GM12878 (cell line): ENCODE measurements at regions of chr19 and their contacts with region 1.

Region 1: DNA sequence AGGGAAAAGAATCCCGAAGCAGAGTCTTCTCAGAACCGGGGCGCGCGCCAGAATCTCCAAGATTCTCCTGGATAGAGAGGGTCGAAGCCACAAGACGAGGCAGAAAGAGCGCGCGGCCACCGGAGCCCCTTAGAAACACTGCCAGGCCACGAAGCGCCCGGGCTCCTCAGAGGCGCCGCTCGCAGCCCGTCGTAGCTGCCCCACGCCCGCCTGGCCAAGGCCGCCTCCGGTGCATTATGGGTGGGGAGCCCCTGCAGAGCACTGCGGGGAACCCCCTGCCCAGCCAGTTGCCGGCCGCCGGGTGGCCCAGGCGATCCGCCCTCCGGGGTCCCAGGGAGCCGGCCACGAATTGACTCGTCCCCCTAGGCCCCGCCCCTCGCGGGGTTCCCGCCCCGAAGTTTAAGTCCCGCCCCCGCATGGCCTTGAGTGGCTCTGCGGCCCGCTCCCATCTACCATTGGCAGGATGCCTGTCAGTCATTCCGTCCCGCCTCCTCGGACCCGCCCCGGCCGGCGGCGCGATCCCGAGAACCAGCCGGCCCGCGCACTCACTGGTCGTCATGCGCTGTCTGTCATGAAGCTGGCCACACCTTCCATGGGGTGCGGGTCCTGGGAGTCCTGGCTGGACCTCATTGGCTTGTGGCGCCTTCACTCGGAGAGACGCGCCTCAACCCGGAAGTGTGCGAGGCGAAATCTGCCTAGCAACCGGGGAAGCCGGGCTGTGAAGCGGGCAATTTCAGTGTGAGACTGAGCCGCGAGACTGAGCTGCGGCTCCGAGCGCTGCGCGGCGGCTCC is 20.2 kb upstream of the GATAD2A start:
- DNase-seq: peak; percentile 99
- ATAC-seq: peak; percentile 95
- H3K4me3 ChIP-seq: peak overlapping the region; percentile 69
- H3K27ac ChIP-seq: peak overlapping the region; percentile 89
- H3K4me1 ChIP-seq: peaks cover 19% of the 10 kb centered on the region
- H3K27me3 ChIP-seq: no peaks in the 10 kb centered on the region
- CTCF ChIP-seq: peak; percentile 9 to 52 (median 27); a peak in 4 of 6 replicates
- EP300 ChIP-seq: no peak
- POLR2A ChIP-seq: peak; percentile 80
- RAD21 ChIP-seq: peak; percentile 51

Region 2: DNA sequence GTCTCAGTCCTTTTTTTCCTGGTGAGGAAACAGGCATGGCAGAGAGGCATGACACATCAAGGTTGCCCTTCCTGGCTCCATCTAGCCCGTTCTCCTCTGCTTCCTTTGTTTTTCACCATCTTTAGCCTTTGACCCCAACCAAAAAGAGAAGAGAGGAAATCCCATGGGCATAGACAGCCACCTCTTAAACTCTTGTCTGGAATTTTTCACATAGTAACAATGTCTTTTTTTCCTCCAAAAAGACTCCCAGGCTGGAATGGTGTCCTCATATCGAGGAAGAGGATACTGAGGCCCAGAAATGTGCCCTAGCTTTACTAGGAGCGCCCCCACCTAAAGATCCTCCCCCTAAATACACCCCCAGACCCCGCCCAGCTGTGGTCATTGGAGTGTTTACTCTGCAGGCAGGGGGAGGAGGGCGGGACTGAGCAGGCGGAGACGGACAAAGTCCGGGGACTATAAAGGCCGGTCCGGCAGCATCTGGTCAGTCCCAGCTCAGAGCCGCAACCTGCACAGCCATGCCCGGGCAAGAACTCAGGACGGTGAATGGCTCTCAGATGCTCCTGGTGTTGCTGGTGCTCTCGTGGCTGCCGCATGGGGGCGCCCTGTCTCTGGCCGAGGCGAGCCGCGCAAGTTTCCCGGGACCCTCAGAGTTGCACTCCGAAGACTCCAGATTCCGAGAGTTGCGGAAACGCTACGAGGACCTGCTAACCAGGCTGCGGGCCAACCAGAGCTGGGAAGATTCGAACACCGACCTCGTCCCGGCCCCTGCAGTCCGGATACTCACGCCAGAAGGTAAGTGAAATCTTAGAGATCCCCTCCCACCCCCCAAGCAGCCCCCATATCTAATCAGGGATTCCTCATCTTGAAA is 999.4 kb before region 1 on chr19 and contains the start of gene GDF15:
- CTCF ChIA-PET with region 1: no interaction called
- POLR2A ChIA-PET with region 1: no interaction called
- RAD21 ChIA-PET with region 1: no interaction called
- SMC1A ChIA-PET with region 1: no interaction called
- in situ Hi-C with region 1: no loop called
- intact Hi-C with region 1: no loop called
- DNase-seq: no peak
- ATAC-seq: peak; percentile 70
- H3K4me3 ChIP-seq: 0 out of 2 replicates have a peak within 1 kb of the TSS, but pooled peaks have one; percentile 5
- H3K27ac ChIP-seq: no peak within 1 kb of the TSS
- H3K4me1 ChIP-seq: peaks cover 8% of the 10 kb centered on the region
- H3K27me3 ChIP-seq: peaks cover 0 to 3% of the 10 kb centered on the region in 2 experiments; a peak in 3 of 4 replicates
- CTCF ChIP-seq: peak; percentile 49 to 85 (median 55)
- EP300 ChIP-seq: no peak
- POLR2A ChIP-seq: peak; percentile 70
- RAD21 ChIP-seq: no peak
- polyA plus RNA-seq, gene GDF15: 0.11 TPM in 1 of 2 experiments, not detected in the other

Region 3: DNA sequence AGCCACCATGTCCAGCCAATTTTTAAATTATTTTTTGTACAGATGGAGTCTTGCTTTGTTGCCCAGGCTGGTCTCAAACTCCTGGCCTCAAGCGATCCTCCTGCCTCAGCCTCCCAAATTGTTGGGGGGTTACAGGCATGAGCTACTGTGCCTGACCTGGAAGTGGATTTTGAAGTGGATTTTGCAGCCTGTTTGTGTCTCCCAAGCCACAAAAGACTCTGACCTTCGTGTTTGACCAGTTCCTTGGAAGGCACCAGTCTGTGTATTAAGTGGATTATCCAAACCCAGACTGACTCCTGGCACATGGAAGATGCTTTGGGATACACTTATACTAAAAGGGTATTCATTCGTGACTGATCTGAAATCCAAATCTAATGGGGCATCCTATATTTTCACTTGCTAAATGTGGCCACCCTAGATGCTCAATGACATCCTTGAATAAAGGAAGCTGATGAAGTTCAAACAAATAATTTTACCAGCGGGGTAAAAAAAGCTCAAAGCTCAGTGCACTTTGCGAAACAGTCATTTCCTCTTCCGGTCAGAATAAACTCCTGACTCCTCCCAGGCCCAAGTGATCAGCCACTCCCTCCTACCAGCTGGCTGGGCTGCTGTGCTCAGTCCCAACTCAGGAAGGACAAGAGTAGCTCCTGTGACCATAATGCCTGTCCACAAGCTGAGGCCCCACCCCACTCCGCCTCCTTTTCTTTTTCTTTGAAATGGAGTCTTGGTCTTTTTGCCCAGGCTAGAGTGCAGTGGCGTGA is 12.5 kb before region 1 on chr19:
- CTCF ChIA-PET with region 1: interaction called, 4 read pairs
- POLR2A ChIA-PET with region 1: interaction called, 6 read pairs
- RAD21 ChIA-PET with region 1: interaction called, 10 read pairs
- SMC1A ChIA-PET with region 1: interaction called, 6 read pairs
- in situ Hi-C with region 1: no loop called
- intact Hi-C with region 1: no loop called
- DNase-seq: no peak
- ATAC-seq: peak; percentile 99
- H3K4me3 ChIP-seq: no peak overlapping the region
- H3K27ac ChIP-seq: peak overlapping the region; percentile 51
- H3K4me1 ChIP-seq: peaks cover 5% of the 10 kb centered on the region
- H3K27me3 ChIP-seq: no peaks in the 10 kb centered on the region
- CTCF ChIP-seq: no peak
- EP300 ChIP-seq: no peak
- POLR2A ChIP-seq: peak; percentile 37; the same call in 1 of the 2 replicates
- RAD21 ChIP-seq: no peak

Region 4: DNA sequence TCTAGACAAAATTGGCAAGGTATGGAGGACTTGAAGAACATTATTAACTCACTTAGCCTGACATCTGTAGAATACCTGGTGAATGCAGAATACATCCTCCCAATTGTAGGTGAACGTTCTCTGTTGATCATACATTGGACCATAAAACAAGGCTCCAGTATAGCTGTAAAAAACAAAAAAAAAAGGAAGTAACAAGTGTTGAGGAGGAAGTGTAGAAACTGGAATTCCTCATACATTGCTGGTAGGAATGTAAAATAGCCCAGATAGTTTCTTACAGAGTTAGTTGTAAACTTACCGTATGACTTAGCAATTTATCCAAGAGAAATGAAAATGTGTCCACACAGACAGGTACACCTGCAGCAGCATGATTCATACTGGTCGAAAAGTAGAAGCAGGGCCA is 85.3 kb after region 1 on chr19:
- CTCF ChIA-PET with region 1: no interaction called
- POLR2A ChIA-PET with region 1: no interaction called
- RAD21 ChIA-PET with region 1: interaction called, 4 read pairs
- SMC1A ChIA-PET with region 1: no interaction called
- in situ Hi-C with region 1: no loop called
- intact Hi-C with region 1: loop called (anchors 5 kb)
- DNase-seq: no peak
- ATAC-seq: no peak
- H3K4me3 ChIP-seq: no peak overlapping the region
- H3K27ac ChIP-seq: no peak overlapping the region
- H3K4me1 ChIP-seq: peaks cover 36% of the 10 kb centered on the region
- H3K27me3 ChIP-seq: no peaks in the 10 kb centered on the region
- CTCF ChIP-seq: no peak
- EP300 ChIP-seq: no peak
- POLR2A ChIP-seq: no peak
- RAD21 ChIP-seq: no peak